MCF 10A (cell line): ENCODE measurements at regions of chr11 and their contacts with region 1.

Region 1: DNA sequence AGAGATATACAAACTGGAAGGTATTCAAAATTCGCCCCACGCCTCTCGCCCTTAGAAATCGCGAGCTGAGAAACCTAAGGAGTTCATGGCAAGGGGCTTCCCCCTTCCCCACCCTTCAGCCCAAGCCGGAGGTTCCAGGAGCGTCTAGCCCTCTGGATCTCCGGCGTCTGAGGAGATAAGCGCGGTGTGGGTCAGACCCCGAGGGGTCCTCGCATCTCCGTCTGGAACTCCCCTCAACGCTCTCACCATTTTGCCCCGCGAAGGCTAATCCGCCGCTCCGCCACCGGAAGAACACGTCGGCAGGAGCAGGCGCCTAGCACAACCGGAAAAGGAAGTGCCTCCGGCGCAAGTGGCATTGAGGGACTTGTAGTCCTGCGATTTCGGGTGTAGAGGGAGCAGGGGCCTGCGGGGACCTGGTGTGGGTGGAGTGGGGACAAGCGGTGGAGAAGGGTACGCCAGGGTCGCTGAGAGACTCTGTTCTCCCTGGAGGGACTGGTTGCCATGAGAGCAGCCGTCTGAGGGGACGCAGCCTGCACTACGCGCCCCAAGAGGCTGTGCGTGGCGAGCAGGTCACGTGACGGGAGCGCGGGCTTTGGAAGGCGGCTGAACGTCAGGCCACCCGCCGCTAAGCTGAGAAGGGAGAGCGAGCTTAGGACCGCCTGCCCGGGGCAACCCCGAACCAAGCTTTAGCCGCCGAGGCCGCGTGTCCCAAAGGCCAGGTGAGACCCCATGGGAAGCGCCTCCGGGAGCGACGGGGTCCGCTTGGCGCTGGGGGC is at the starts of genes FEN1 and TMEM258:
- DNase-seq: peak; percentile 95
- H3K4me3 Mint-ChIP-seq: peak within 1 kb of the TSS; percentile 81
- H3K27ac Mint-ChIP-seq: peak within 1 kb of the TSS; percentile 98
- H3K4me1 Mint-ChIP-seq: peaks cover 11% of the 10 kb centered on the region
- H3K27me3 Mint-ChIP-seq: no peaks in the 10 kb centered on the region
- CTCF ChIP-seq: no peak
- total RNA-seq, gene FEN1: 19.9 and 21.5 TPM in 2 replicates
- total RNA-seq, gene TMEM258: 184 and 300 TPM in 2 replicates

Region 2: DNA sequence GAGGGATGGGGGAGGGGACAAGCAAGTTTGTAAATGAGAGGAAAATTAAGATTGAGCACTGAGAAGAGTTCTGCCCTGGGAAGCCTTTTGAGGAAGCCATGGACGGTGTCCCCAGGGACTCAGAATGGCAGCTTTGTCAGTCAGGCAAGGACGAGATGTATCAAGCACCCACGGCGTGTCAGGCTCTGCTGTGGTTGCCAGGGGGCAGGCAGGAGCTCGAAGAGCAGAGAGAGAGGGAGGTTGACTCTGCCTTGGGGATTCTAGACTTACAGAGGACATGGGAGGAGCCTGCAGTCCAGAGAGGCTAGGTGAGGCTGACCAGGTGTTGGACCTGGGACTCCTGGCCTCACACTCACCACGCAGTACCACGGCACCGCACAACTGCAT is 182.5 kb before region 1 on chr11:
- CTCF ChIA-PET with region 1: no interaction called
- POLR2A ChIA-PET with region 1: no interaction called
- intact Hi-C with region 1: no loop called
- DNase-seq: no peak
- H3K4me3 Mint-ChIP-seq: no peak overlapping the region
- H3K27ac Mint-ChIP-seq: no peak overlapping the region
- H3K4me1 Mint-ChIP-seq: peaks cover 24% of the 10 kb centered on the region
- H3K27me3 Mint-ChIP-seq: peaks cover 11% of the 10 kb centered on the region
- CTCF ChIP-seq: peak; percentile 24

Region 3: GRCh38 chr11:61805146-61805545 is 12.6 kb after region 1 on chr11:
- CTCF ChIA-PET with region 1: interaction called, 47 read pairs
- POLR2A ChIA-PET with region 1: no interaction called
- intact Hi-C with region 1: no loop called
- DNase-seq: no peak
- H3K4me3 Mint-ChIP-seq: no peak overlapping the region
- H3K27ac Mint-ChIP-seq: no peak overlapping the region
- H3K4me1 Mint-ChIP-seq: no peaks in the 10 kb centered on the region
- H3K27me3 Mint-ChIP-seq: no peaks in the 10 kb centered on the region
- CTCF ChIP-seq: no peak

Region 4: DNA sequence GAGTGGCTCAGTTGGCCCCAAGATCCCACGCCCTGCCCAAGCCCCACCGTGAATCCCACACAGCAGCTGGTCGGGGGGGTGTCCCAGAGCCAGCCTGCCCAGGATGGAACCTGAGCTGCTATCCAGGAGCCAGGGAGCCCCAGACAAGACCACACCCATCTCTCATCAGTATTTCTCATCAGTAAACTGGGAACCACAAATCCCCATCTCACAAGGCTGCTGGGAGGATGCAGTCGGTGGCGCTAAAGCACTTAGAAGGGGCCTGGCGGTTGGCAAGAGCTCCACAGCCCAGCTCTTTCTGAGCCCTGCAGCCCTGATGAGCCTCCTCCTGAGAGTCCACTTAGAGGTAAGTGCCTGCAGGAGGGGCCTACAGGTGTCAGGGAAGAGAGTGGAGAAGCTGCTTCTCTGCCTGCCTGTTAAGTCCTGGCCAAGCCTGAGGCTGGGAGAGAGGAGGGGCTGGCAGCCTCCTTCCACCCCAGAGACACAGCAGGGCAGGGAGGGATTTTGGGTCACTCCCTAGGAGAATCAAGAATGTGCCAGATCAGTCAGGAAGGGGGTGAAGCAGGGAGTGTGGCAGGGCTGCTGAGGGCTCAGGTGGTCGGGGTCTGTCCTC is 92.8 kb after region 1 on chr11:
- CTCF ChIA-PET with region 1: interaction called, 23 read pairs
- POLR2A ChIA-PET with region 1: interaction called, 8 read pairs
- intact Hi-C with region 1: no loop called
- DNase-seq: no peak
- H3K4me3 Mint-ChIP-seq: no peak overlapping the region
- H3K27ac Mint-ChIP-seq: no peak overlapping the region
- H3K4me1 Mint-ChIP-seq: peaks cover 31% of the 10 kb centered on the region
- H3K27me3 Mint-ChIP-seq: no peaks in the 10 kb centered on the region
- CTCF ChIP-seq: no peak

Region 5: GRCh38 chr11:61947486-61948210 is 155.2 kb after region 1 on chr11:
- CTCF ChIA-PET with region 1: interaction called, 110 read pairs
- POLR2A ChIA-PET with region 1: interaction called, 12 read pairs
- intact Hi-C with region 1: loop called (anchors 1 kb)
- DNase-seq: peak; percentile 89
- H3K4me3 Mint-ChIP-seq: no peak overlapping the region
- H3K27ac Mint-ChIP-seq: no peak overlapping the region
- H3K4me1 Mint-ChIP-seq: peaks cover 15% of the 10 kb centered on the region
- H3K27me3 Mint-ChIP-seq: peaks cover 11% of the 10 kb centered on the region
- CTCF ChIP-seq: peak; percentile 84

Region 6: DNA sequence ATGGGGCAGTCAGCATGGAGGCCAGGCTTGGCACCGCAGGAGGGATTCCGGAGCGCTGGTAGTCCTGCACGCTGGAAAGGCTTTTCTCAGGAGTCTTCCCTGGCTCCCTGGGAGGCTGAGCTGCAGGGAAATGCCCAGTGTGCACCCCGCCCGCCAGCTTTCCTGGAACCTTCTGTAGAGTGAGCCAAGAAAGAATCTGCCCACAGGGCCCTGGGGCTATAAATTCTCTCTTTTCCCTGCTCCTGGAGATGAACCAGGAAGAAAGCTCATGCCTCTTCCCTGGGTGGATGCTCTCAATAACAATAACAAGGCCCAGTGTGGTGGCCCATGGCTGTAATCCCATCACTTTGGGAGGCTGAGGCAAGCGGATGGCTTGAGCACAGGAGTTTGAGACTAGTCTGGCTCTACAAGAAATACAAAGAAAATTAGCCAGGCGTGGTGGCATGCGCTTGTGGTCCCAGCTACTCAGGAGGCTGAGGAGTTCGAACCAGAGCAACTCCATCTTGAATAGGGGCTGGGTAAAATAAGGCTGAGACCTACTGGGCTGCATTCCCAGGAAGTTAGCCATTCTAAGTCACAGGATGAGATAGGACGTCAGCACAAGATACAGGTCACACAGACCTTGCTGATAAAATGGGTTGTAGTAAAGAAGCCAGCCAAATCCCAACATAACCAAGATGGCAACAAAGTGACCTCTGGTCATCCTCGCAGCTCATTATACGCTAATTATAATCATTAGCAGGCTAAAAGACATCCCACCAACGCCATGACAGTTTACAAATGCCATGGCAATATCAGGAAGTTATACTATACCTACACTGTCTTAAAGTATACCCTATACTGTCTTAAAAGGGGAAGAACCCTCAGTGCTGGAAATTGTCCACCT is 221.3 kb after region 1 on chr11:
- CTCF ChIA-PET with region 1: no interaction called
- POLR2A ChIA-PET with region 1: no interaction called
- intact Hi-C with region 1: no loop called
- DNase-seq: peak; percentile 96
- H3K4me3 Mint-ChIP-seq: peak overlapping the region; percentile 54
- H3K27ac Mint-ChIP-seq: peak overlapping the region; percentile 85
- H3K4me1 Mint-ChIP-seq: peaks cover 20% of the 10 kb centered on the region
- H3K27me3 Mint-ChIP-seq: no peaks in the 10 kb centered on the region
- CTCF ChIP-seq: no peak

Region 7: GRCh38 chr11:62048065-62048464 is 255.6 kb after region 1 on chr11:
- CTCF ChIA-PET with region 1: interaction called, 20 read pairs
- POLR2A ChIA-PET with region 1: no interaction called
- intact Hi-C with region 1: no loop called
- DNase-seq: peak; percentile 31
- H3K4me3 Mint-ChIP-seq: peak overlapping the region; percentile 31
- H3K27ac Mint-ChIP-seq: peak overlapping the region; percentile 77
- H3K4me1 Mint-ChIP-seq: peaks cover 35% of the 10 kb centered on the region
- H3K27me3 Mint-ChIP-seq: no peaks in the 10 kb centered on the region
- CTCF ChIP-seq: no peak

Region 8: DNA sequence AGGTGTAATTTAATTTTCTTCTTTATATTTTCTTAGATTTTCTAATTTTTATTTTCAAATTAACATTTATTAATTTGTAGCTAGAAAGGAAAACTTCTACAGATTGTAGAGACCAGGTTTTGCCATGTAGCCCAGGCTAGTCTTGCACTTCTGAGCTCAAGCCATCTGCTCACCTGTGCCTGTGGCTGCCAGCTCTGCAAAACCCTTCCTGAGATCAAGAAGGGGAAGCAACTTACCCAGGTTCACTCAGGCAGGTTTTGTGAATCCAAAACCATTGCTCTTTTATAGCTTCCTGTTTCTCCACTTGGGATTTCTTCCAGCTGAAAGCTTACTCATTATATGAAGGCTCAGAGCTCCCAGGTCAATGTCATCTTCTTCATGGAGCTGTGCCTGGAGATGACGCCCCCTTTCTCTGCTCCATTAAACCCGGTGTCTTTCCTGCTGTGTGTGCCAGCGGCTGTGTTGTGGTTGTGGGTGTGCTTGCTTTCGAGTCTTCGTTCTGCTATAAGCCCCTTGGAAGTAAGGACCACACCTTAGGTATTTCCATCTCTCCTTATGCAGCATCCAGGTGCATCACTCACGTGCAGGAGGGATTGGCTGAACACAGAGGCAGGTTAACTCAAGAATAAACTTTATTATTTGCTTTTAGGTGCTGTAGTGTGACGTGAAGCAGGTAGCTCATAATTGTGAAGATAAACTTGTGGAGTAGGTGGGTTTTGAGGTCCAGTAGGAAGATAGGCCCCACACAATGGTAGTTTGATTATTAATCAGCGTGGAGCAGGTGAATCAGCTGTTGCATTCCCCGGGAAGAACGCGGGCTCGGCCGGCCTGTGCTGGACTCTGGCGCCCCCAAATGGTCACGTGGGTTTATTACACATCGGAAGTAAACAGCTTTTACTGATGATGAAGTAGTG is 289.1 kb after region 1 on chr11:
- CTCF ChIA-PET with region 1: interaction called, 63 read pairs
- POLR2A ChIA-PET with region 1: interaction called, 6 read pairs
- intact Hi-C with region 1: loop called (anchors 1 kb)
- DNase-seq: peak; percentile 66
- H3K4me3 Mint-ChIP-seq: no peak overlapping the region
- H3K27ac Mint-ChIP-seq: no peak overlapping the region
- H3K4me1 Mint-ChIP-seq: peaks cover 7% of the 10 kb centered on the region
- H3K27me3 Mint-ChIP-seq: no peaks in the 10 kb centered on the region
- CTCF ChIP-seq: peak; percentile 87